AG04449 (cell line): ENCODE measurements at regions of chr2 and their contacts with region 1.

Region 1: GRCh38 chr2:106596844-106597243 is 109.7 kb downstream of the CD8B2 start:
- DNase-seq: no peak
- H3K4me3 ChIP-seq: no peak overlapping the region
- CTCF ChIP-seq: peak; percentile 15

Region 2: DNA sequence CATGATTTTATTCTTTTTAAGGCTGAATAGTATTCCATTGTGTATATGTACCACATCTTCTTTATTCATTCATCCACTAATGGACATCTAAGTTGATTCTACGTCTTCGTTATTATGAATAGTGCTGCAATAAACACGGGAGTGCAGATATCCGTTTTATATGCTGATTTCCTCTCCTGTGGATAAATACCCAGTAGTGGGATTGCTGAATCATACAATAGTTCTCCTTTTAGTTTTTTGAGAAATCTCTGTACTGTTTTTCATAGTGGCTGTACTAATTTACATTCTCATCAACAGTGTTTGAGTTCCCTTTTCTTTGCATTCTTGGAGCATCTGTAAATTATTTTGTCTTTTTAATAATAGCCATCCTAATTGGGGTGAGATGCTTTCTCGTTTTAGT is 243.2 kb before region 1 on chr2:
- CTCF ChIA-PET with region 1: no interaction called
- POLR2A ChIA-PET with region 1: no interaction called
- DNase-seq: no peak
- H3K4me3 ChIP-seq: no peak overlapping the region
- CTCF ChIP-seq: no peak

Region 3: GRCh38 chr2:106582148-106583143 is 14.4 kb before region 1 on chr2:
- CTCF ChIA-PET with region 1: interaction called, 10 read pairs
- POLR2A ChIA-PET with region 1: no interaction called
- DNase-seq: no peak
- H3K4me3 ChIP-seq: peak overlapping the region; percentile 42
- CTCF ChIP-seq: peak; percentile 87

Region 4: DNA sequence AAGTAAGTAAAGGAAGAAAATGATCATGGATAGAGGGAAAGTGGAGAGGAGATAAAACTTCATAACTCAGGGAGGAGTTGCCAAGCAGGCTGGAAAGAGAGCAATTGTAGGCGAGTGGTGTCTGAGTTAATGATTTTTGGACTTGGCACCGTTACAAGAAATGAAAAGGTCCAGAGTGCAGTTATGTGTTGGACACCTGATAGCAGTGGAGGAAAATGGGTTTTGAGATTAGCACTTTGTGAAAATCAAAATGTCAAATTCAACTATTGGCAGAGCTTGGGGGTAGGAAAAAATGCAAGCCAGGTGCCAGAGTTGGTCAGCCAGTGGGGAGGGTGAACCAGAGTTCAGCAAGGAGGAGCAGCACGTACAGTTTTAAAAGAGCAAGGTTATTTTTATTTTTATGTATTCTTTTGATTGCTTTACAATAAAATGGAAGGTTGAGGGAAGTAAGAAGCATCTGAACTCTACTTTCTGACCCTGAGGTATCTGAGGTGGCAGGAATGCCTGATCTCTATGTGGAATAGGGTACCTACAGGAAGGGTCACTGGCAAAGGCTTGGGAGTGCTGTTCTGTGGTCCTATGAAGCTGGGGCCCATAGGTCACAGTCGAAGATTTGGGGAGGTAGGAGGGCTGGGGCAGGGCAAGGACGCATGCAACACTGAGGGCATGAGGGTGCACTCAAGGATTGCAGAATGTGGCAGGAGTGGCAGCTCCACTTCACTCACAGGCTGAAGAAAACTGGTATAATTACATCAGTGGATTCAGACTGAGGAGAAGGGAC is 17.9 kb after region 1 on chr2:
- CTCF ChIA-PET with region 1: no interaction called
- POLR2A ChIA-PET with region 1: no interaction called
- DNase-seq: no peak
- H3K4me3 ChIP-seq: no peak overlapping the region
- CTCF ChIP-seq: no peak